Gastrocnemius medialis (tissue), 4 donors: ENCODE measurements at regions of chr5 and their contacts with region 1.

Region 1: GRCh38 chr5:82356808-82357671 is 78.9 kb upstream of the RPS23 start:
- DNase-seq: peak; percentile 24 to 74
- ATAC-seq: peak; percentile 54 to 74
- H3K4me3 ChIP-seq: no peak overlapping the region
- H3K27ac ChIP-seq: peak overlapping the region; percentile 20 to 70 (median 45)
- H3K4me1 ChIP-seq: no peaks in the 10 kb centered on the region
- H3K27me3 ChIP-seq: no peaks in the 10 kb centered on the region
- CTCF ChIP-seq: no peak
- POLR2A ChIP-seq: no peak

Region 2: GRCh38 chr5:82413302-82414040 is 56.4 kb after region 1 on chr5:
- in situ Hi-C with region 1: no loop called
- intact Hi-C with region 1: no loop called
- DNase-seq: no peak
- ATAC-seq: no peak
- H3K4me3 ChIP-seq: no peak overlapping the region
- H3K27ac ChIP-seq: no peak overlapping the region
- H3K4me1 ChIP-seq: no peaks in the 10 kb centered on the region
- H3K27me3 ChIP-seq: no peaks in the 10 kb centered on the region
- CTCF ChIP-seq: no peak
- POLR2A ChIP-seq: no peak

Region 3: GRCh38 chr5:82439750-82440445 is 82.9 kb after region 1 on chr5:
- in situ Hi-C with region 1: no loop called
- intact Hi-C with region 1: no loop called
- DNase-seq: no peak
- ATAC-seq: no peak
- H3K4me3 ChIP-seq: no peak overlapping the region
- H3K27ac ChIP-seq: no peak overlapping the region
- H3K4me1 ChIP-seq: no peaks in the 10 kb centered on the region
- H3K27me3 ChIP-seq: no peaks in the 10 kb centered on the region
- CTCF ChIP-seq: no peak
- POLR2A ChIP-seq: no peak

Region 4: DNA sequence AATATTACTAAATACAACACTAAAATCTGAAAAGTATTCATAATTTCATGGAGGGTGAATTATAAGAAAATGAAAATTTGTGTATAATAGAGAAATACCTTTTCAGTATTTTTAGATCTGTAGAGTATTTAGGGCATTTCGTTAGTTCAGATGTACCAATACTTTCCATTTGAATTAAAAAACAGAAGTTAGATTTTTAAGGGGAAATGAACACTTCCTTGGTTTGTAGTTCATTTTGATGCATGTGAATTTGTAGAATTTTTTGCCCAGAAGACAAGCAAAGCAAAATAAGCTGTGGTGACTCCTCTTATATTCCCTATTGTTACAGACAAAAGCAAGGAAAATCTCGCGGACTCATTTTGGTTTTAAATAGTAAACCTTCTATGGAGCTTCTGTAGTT is 130.1 kb after region 1 on chr5:
- in situ Hi-C with region 1: no loop called
- intact Hi-C with region 1: no loop called
- DNase-seq: no peak
- ATAC-seq: no peak
- H3K4me3 ChIP-seq: no peak overlapping the region
- H3K27ac ChIP-seq: no peak overlapping the region
- H3K4me1 ChIP-seq: no peaks in the 10 kb centered on the region
- H3K27me3 ChIP-seq: no peaks in the 10 kb centered on the region
- CTCF ChIP-seq: no peak
- POLR2A ChIP-seq: no peak

Region 5: DNA sequence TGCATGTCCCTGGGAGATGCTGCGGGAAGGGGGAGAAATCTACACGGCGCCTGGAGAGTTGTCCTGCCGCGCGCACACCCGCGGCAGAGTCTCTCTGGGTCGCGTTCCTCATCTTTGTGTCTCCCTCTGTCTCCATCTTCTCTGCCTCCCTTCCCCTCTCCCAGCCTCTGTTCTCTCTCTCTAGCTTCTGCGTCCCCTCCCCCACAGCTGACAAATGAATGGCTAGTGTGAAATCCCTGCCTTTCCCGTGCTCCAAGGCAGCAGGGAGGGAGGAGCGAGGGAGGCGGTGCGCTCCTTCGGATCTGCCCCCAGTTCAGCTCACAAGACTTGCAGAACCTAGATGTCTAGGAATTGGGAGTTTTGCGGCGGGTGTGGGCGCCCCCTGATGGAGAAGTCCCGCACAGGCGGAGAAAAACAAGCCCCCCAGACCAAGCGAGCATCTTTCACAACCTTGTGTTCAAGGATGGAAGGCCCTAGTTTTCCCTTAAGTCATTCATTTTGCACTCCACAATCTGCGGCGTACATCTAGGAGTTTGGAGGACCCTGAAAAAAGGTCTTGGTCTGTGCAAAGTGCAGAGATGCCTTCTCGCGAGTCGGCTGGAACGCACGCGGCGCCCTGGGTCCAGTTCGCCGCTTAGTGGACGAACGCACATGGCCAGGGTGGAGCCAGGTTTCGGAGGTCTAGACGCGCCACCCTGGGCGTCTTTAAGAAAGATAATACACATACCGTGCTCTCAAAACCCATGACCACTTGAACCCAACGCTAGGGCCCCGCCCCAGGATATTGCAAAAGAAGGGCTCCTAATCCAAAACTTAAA is 1116.5 kb after region 1 on chr5:
- in situ Hi-C with region 1: loop called in 1 of 4 experiments (anchors 25 kb)
- intact Hi-C with region 1: loop called (anchors 5 kb)
- DNase-seq: peak; percentile 67 to 82
- ATAC-seq: peak; percentile 67 to 71
- H3K4me3 ChIP-seq: peak overlapping the region; percentile 49 to 57 (median 50)
- H3K27ac ChIP-seq: peak overlapping the region; percentile 59 to 65 (median 62)
- H3K4me1 ChIP-seq: peaks cover 14 to 35% of the 10 kb centered on the region in 2 donors
- H3K27me3 ChIP-seq: peaks cover 49 to 70% (median 68%) of the 10 kb centered on the region in 3 donors
- CTCF ChIP-seq: peak; percentile 18 to 61 (median 52)
- POLR2A ChIP-seq: peak; percentile 6 to 53